Breast epithelium (tissue), 4 donors: ENCODE measurements at regions of chr11 and their contacts with region 1.

Region 1: GRCh38 chr11:12482839-12483238 is 105.5 kb downstream of the PARVA start:
- DNase-seq: peak; percentile 63 to 76
- H3K4me3 ChIP-seq: no peak overlapping the region
- H3K27ac ChIP-seq: peak overlapping the region; percentile 68 to 73
- H3K4me1 ChIP-seq: peaks cover 0 to 8% of the 10 kb centered on the region in 2 donors
- H3K27me3 ChIP-seq: no peaks in the 10 kb centered on the region
- CTCF ChIP-seq: no peak
- POLR2A ChIP-seq: no peak

Region 2: GRCh38 chr11:12354750-12355545 is 127.9 kb before region 1 on chr11:
- intact Hi-C with region 1: no loop called
- DNase-seq: no peak
- H3K4me3 ChIP-seq: no peak overlapping the region
- H3K27ac ChIP-seq: no peak overlapping the region
- H3K4me1 ChIP-seq: no peaks in the 10 kb centered on the region
- H3K27me3 ChIP-seq: no peaks in the 10 kb centered on the region
- CTCF ChIP-seq: no peak
- POLR2A ChIP-seq: no peak

Region 3: DNA sequence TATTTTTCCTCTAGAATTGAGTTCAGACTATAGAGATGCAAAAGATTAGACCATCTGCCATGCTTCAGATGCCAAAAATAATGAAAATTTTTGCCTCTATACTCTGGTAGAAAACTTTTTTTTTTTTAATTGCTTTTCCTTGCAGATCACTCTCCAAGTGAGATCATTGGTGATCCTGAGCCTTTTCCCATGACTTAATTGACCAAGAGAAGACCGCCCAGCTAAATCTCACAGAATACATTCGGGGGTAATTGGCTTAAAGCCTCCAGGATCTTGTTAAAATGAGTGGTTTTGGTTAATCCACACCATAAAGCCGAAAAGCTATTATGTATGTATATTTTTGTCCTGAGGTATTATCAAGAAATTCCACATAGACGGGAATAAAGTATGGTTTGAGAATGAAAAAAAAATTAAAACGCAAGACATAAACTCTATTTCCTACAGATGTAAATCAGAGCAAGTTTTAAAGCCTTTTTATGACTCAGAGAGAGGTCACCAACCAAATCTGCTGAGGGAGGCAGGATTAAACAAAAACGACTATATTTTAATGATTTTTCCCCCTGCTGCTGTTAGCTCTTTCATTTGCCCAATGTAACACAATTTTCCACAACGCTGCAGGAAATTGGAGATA is 41.5 kb before region 1 on chr11:
- intact Hi-C with region 1: loop called (anchors 1 kb)
- DNase-seq: no peak
- H3K4me3 ChIP-seq: no peak overlapping the region
- H3K27ac ChIP-seq: no peak overlapping the region
- H3K4me1 ChIP-seq: no peaks in the 10 kb centered on the region
- H3K27me3 ChIP-seq: no peaks in the 10 kb centered on the region
- CTCF ChIP-seq: no peak
- POLR2A ChIP-seq: no peak